ENCODE measurements at regions of chr4 and their contacts with region 1.

Region 1: DNA sequence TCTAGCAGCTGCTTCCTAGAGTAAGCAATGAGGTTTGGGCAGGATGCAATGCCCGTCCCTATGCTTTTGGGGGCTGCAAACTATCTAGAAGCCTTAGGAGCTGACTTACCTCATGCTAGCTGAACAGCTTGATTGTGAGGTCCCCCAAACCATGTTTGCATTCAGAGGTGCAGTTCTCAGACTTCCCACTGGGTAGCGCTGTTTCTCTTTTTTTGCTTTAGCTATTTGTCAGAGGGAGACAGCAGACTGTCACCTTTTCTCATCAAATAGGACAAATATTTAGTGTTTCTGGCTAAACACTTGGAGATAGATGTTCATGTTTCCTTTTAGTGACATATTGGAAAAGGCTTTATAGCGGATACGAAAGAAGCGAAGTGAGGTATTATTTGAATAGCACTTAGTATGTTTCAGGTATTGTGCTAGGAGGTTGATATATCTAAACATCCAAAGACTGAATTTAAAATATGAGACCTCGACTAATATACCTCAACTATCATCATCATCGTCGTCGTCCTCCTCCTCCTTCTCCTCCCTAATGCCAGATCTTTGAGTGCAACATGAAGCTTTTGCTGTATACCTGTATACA is 18.7 kb upstream of the TMEM192 start:
- DNase-seq: peak; percentile 63 to 85 (median 75)
- ATAC-seq: peak; percentile 97
- H3K4me3 ChIP-seq: no peak overlapping the region
- H3K4me3 Mint-ChIP-seq: no peak overlapping the region
- H3K27ac ChIP-seq: no peak overlapping the region
- H3K27ac Mint-ChIP-seq: no peak overlapping the region
- H3K4me1 ChIP-seq: no peaks in the 10 kb centered on the region
- H3K4me1 Mint-ChIP-seq: peaks cover 2% of the 10 kb centered on the region
- H3K27me3 ChIP-seq: no peaks in the 10 kb centered on the region
- H3K27me3 Mint-ChIP-seq: peaks cover 11% of the 10 kb centered on the region
- CTCF ChIP-seq: peak; percentile 92

Region 2: DNA sequence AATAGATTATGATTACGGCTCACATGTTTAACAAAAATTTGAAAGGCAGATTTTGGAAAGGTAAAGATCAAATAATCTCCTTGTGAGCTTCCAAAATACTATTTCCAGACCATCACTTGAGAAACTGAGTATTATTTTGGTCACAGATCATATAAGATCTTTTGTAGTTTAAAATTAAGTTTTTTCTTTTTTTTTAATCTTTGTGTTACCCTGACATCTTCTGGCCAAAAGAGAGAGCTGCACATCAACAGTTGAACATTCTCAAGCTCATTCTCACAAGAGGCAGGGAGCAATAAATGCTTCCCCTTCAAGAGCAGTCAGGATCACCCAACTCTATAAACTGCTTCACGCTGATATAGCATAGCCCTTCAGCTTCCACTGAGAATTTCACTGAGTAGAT is 34.6 kb before region 1 on chr4:
- CTCF ChIA-PET with region 1: interaction called, 3 read pairs
- POLR2A ChIA-PET with region 1: no interaction called
- intact Hi-C with region 1: loop called in 1 of 2 experiments (anchors 2 kb)
- DNase-seq: peak in 2 of 9 experiments; percentile 10 to 15
- ATAC-seq: no peak
- H3K4me3 ChIP-seq: no peak overlapping the region
- H3K4me3 Mint-ChIP-seq: no peak overlapping the region
- H3K27ac ChIP-seq: no peak overlapping the region
- H3K27ac Mint-ChIP-seq: no peak overlapping the region
- H3K4me1 ChIP-seq: no peaks in the 10 kb centered on the region
- H3K4me1 Mint-ChIP-seq: no peaks in the 10 kb centered on the region
- H3K27me3 ChIP-seq: no peaks in the 10 kb centered on the region
- H3K27me3 Mint-ChIP-seq: no peaks in the 10 kb centered on the region
- CTCF ChIP-seq: peak; percentile 48

Region 3: DNA sequence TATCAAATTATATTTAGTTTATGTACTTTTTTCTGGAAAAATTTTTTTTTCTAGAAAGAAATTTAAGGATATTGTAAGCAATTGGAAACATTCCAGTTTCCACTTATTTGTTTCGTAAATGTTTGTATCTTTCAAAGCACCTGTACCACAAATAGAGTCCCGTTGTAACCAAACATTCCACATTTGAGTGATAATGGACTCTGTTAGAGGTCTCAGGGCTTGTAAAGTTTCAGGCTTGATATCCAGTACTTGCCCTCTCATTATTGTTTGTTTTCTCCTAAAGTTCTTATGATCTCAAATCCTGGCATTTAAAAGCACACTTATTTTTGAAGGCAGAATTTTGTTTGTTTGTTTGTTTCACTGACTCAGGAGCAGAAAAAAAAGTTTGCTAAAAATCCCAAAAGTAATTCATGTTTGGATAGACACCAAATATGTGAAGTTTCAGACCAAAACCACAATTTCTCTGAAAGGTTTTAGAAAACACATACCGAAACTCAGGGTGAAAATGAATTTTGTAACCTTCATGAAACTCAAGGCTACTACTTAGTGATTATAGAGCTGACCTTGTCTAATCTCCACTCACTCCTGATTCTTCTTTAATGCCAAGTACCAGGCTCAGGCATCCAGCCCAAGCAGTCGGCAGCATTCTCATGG is 13.0 kb before region 1 on chr4:
- CTCF ChIA-PET with region 1: interaction called, 16 read pairs
- POLR2A ChIA-PET with region 1: no interaction called
- intact Hi-C with region 1: loop called in 1 of 2 experiments (anchors 2 kb)
- DNase-seq: no peak
- ATAC-seq: no peak
- H3K4me3 ChIP-seq: no peak overlapping the region
- H3K4me3 Mint-ChIP-seq: no peak overlapping the region
- H3K27ac ChIP-seq: no peak overlapping the region
- H3K27ac Mint-ChIP-seq: no peak overlapping the region
- H3K4me1 ChIP-seq: peaks cover 4% of the 10 kb centered on the region
- H3K4me1 Mint-ChIP-seq: peaks cover under 1% of the 10 kb centered on the region
- H3K27me3 ChIP-seq: peaks cover 0 to 2% of the 10 kb centered on the region in 2 experiments
- H3K27me3 Mint-ChIP-seq: peaks cover 11% of the 10 kb centered on the region
- CTCF ChIP-seq: no peak

Region 4: DNA sequence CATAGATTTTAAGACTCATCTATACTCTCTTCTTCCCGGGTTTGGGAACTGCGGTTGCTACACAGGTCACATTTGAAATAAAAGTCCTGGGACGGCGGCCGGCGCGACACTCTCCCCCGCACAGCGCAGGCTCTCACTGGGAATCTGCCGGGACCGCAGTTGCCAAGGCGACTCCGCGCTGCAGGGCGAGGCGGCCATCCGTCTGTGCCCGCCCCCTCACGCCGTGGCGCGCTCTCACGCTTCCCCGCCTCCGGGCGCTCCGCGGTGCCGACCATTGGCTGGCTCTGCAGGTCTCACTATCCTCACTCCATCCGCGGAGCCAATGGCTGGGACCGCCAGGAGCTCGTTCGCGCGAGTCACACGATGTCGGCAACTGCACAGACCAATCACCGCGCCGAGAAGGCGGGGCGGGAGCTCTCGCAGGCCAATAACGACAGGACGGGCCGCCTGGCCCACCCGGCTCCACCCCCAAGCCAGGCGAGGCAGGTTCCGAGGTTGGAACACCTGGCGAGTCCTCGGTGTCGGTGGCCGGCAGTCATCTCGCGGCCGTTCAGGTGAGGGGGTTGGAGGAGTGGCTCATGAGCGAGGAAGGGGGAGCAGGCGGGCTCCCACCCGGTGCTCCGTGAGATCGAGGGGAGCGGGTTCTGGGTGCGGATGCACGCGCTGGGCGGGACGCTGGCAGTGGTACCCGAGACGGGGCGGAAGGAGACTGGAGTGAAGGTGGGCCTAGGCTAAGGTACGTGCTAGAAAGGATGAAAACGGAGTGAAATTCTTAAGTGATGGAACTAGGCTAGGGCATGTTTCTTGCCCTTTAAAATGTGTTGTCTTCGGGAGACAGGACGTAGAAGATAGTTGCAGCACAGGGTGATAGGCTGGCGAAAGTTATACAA is 196.1 kb after region 1 on chr4 and contains the start of gene MSMO1:
- CTCF ChIA-PET with region 1: interaction called, 7 read pairs
- POLR2A ChIA-PET with region 1: interaction called, 5 read pairs
- intact Hi-C with region 1: loop called in 1 of 2 experiments (anchors 2 kb)
- DNase-seq: peak; percentile 95 to 99 (median 98)
- ATAC-seq: peak; percentile 95
- H3K4me3 ChIP-seq: peak within 1 kb of the TSS; percentile 64 to 92
- H3K4me3 Mint-ChIP-seq: no peak within 1 kb of the TSS
- H3K27ac ChIP-seq: peak within 1 kb of the TSS; percentile 84 to 87
- H3K27ac Mint-ChIP-seq: no peak within 1 kb of the TSS
- H3K4me1 ChIP-seq: peaks cover 21% of the 10 kb centered on the region
- H3K4me1 Mint-ChIP-seq: peaks cover 37% of the 10 kb centered on the region
- H3K27me3 ChIP-seq: no peaks in the 10 kb centered on the region
- H3K27me3 Mint-ChIP-seq: no peaks in the 10 kb centered on the region
- CTCF ChIP-seq: no peak
- total RNA-seq, gene MSMO1: 18.6 to 19.2 TPM

Region 5: DNA sequence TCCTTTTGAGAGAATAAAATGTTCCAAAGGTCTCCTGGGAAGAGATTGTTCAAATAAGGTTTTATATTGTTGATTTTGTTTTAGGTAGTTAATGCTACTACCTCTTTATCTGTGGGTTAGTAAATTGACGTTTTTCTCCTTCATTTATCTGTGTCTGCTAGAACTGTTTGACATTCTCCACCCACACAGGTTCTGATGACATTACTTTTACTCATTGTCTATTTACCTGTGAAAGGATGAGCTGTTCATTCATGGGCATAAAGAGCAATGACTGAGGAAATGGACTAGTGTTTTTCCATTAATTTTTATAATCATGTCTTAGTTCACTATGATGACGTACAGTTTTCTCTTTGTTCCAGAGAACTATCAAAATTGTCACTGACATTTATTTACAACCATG is 323.1 kb after region 1 on chr4:
- CTCF ChIA-PET with region 1: interaction called, 19 read pairs
- POLR2A ChIA-PET with region 1: no interaction called
- intact Hi-C with region 1: no loop called
- DNase-seq: no peak
- ATAC-seq: no peak
- H3K4me3 ChIP-seq: no peak overlapping the region
- H3K4me3 Mint-ChIP-seq: no peak overlapping the region
- H3K27ac ChIP-seq: no peak overlapping the region
- H3K27ac Mint-ChIP-seq: no peak overlapping the region
- H3K4me1 ChIP-seq: no peaks in the 10 kb centered on the region
- H3K4me1 Mint-ChIP-seq: no peaks in the 10 kb centered on the region
- H3K27me3 ChIP-seq: no peaks in the 10 kb centered on the region
- H3K27me3 Mint-ChIP-seq: peaks cover 6% of the 10 kb centered on the region
- CTCF ChIP-seq: no peak

Region 6: DNA sequence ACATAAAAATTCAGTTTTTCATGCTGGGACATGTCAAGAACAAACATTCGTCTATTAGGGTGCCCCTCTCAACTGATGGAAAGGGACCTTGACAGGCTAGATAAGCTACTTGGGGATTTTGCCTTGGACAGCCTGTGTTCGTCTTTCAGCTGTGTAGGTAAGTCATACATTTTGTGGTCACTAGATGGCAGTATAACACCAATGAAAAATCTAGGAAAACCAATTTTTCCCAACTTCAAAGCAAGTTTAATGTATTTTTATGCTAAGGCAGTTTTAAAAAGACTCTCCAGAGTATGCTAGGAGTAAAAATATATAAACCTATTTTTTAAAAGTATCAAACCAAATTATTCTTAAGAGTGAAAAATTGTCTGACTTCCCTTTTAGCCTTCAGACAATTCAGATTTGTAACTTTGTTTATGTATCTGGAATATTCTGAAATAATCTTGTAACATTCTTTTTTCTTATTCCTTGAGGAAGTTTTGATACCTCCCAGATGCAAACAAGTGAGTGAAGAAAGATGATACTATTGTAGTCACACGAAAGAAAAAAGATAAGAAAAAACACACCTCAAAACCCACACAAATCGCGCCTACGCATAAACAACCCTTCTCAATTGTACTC is 405.8 kb after region 1 on chr4:
- CTCF ChIA-PET with region 1: interaction called, 3 read pairs
- POLR2A ChIA-PET with region 1: no interaction called
- intact Hi-C with region 1: loop called in 1 of 2 experiments (anchors 1 kb)
- DNase-seq: peak in 2 of 9 experiments; percentile 35 to 38
- ATAC-seq: no peak
- H3K4me3 ChIP-seq: no peak overlapping the region
- H3K4me3 Mint-ChIP-seq: no peak overlapping the region
- H3K27ac ChIP-seq: no peak overlapping the region
- H3K27ac Mint-ChIP-seq: no peak overlapping the region
- H3K4me1 ChIP-seq: no peaks in the 10 kb centered on the region
- H3K4me1 Mint-ChIP-seq: no peaks in the 10 kb centered on the region
- H3K27me3 ChIP-seq: no peaks in the 10 kb centered on the region
- H3K27me3 Mint-ChIP-seq: peaks cover 9% of the 10 kb centered on the region
- CTCF ChIP-seq: peak; percentile 80